IMR-90 (cell line): ENCODE measurements at regions of chr7 and their contacts with region 1.

Region 1: GRCh38 chr7:101772513-101773211 is 44.8 kb upstream of the CUX1 start:
- DNase-seq: no peak
- ATAC-seq: no peak
- H3K4me3 ChIP-seq: no peak overlapping the region
- H3K27ac ChIP-seq: no peak overlapping the region
- H3K4me1 ChIP-seq: no peaks in the 10 kb centered on the region
- H3K27me3 ChIP-seq: peaks cover 50% of the 10 kb centered on the region
- CTCF ChIP-seq: no peak
- POLR2A ChIP-seq: no peak
- RAD21 ChIP-seq: no peak

Region 2: DNA sequence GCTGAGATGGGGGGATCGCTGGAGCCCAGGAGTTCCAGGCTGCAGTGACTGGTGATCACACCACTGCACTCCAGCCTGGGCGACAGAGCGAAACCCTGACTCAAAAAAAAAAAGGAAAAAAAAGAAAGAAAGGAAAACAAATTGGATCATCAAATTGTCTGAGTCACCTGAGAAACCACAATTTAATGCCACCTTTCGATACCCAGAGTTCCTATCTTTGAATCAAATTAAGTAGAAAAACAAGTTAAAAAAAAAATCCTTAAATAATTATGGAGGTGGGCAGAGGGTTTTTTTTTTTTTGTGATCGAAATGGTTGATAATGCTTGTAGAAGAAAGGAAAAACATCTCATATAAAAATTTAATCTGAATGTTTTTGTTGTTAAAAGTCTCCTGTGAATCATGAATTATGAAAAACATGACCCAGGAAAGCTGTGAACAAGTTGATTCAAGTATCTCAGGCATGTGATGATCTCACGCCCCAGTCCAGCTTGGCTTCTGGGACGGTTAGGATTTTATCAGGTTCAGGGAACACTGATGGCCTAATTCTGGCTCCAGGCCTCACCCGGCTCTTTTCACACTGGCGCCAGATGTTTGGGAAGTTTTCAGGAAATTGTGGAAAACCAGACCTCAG is 19.5 kb after region 1 on chr7:
- CTCF ChIA-PET with region 1: no interaction called
- POLR2A ChIA-PET with region 1: no interaction called
- dilution Hi-C with region 1: no loop called
- in situ Hi-C with region 1: no loop called
- intact Hi-C with region 1: loop called (anchors 1 kb)
- DNase-seq: no peak
- ATAC-seq: peak; percentile 32; the same call in 1 of the 2 replicates
- H3K4me3 ChIP-seq: no peak overlapping the region
- H3K27ac ChIP-seq: no peak overlapping the region
- H3K4me1 ChIP-seq: no peaks in the 10 kb centered on the region
- H3K27me3 ChIP-seq: peaks cover 14% of the 10 kb centered on the region
- CTCF ChIP-seq: no peak
- POLR2A ChIP-seq: no peak
- RAD21 ChIP-seq: no peak